ENCODE measurements at regions of chr19 and their contacts with region 1.

Region 1: DNA sequence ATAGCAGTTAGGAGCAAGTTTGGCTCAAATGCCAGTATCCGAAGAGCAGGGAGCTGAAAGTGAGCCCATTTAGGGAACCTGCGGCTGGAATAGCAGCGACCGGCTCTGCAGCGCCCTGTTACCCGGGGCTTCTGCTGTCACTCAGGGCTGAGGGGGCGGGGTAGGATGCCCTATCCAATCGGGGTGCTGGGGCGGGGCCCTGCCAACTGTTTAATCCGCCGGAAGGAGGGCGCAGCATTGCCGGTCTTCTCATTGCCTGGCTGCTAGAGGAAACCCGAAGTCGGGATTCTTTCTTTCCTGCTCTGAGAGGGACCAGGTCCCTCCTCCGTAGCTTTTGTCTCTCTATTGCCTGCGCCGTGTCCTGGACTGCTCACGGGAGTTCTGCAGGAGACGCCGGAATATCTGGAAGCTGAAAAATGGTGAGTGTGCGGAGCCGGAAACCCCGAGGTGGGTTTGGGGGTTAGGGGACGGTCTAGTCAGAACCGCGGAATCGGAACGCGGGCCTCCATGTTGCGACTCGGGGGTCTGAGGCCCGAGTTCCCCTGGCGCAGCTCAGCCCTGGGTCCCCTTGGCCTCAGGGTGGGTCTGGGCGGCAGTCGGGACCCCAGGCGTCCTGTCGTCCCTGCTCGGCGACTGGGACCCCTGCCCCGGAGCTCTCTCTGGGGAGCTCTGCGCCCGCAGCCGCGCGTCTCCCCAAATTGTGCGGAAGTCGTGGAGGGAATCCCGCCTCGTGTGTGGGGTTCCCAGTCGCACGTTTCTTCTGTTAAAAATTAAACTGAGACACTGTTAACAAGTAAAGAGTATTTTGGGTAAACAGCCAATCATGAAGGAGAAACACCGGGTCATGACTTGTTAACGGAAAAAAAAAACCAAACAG is 22.8 kb downstream of the ZNF763 start:
- DNase-seq: peak; percentile 94 to 97
- H3K4me3 ChIP-seq: peak overlapping the region; percentile 81 to 86 (median 86)
- H3K27ac ChIP-seq: peak overlapping the region; percentile 81 to 84
- H3K4me1 ChIP-seq: no peaks in the 10 kb centered on the region
- H3K27me3 ChIP-seq: no peaks in the 10 kb centered on the region
- CTCF ChIP-seq: no peak
- POLR2A ChIP-seq: no peak

Region 2: DNA sequence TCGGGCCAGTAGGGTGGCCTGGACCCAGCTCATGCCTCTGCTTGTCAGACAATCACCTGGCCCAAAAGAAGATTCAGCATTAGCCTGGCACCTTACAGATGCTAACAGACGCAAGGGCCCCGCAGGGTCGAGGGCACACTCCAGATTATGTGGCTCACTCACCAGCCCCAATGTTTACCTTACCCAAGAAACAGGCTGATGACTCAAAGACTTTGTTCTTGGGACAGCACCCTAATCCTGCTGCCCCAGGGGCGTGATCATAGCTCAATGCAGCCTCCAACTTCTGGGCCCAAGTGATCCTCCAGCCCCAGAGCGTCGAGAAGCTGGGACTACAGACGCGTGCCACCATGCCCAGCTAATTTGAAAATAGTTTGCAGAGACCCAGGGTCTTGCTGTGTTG is 468.5 kb before region 1 on chr19:
- intact Hi-C with region 1: no loop called
- DNase-seq: no peak
- H3K4me3 ChIP-seq: no peak overlapping the region
- H3K27ac ChIP-seq: no peak overlapping the region
- H3K4me1 ChIP-seq: no peaks in the 10 kb centered on the region
- H3K27me3 ChIP-seq: no peaks in the 10 kb centered on the region
- CTCF ChIP-seq: no peak
- POLR2A ChIP-seq: no peak

Region 3: GRCh38 chr19:11861301-11861700 is 126.3 kb before region 1 on chr19:
- intact Hi-C with region 1: no loop called
- DNase-seq: no peak
- H3K4me3 ChIP-seq: no peak overlapping the region
- H3K27ac ChIP-seq: no peak overlapping the region
- H3K4me1 ChIP-seq: no peaks in the 10 kb centered on the region
- H3K27me3 ChIP-seq: no peaks in the 10 kb centered on the region
- CTCF ChIP-seq: no peak
- POLR2A ChIP-seq: no peak

Region 4: DNA sequence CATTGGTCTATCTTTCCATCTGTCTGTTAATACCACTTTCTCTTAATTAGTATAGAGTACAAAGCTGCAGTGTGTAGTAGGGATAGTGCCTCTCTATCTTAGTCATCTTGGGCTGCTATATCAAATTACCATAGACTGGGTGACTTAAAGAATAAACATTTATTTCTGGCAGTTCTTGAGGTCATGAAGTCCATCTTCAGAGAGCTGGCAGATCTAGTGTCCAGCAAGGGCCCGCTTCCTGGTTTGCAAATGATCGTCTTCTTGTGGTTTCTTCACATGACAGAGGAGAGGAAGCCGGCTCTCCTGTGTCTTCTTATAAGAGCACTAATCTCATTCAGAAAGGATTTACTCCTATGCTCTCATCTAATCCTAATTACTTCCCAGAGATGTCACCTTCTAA is 56.6 kb before region 1 on chr19:
- intact Hi-C with region 1: loop called (anchors 10 kb)
- DNase-seq: no peak
- H3K4me3 ChIP-seq: no peak overlapping the region
- H3K27ac ChIP-seq: no peak overlapping the region
- H3K4me1 ChIP-seq: peaks cover 0 to 2% of the 10 kb centered on the region in 2 donors
- H3K27me3 ChIP-seq: no peaks in the 10 kb centered on the region
- CTCF ChIP-seq: no peak
- POLR2A ChIP-seq: no peak

Region 5: GRCh38 chr19:12035220-12036153 is 47.8 kb after region 1 on chr19 and contains the start of gene ZNF433:
- intact Hi-C with region 1: no loop called
- DNase-seq: peak; percentile 97 to 98
- H3K4me3 ChIP-seq: peak within 1 kb of the TSS; percentile 82 to 84 (median 83)
- H3K27ac ChIP-seq: peak within 1 kb of the TSS; percentile 96 to 97
- H3K4me1 ChIP-seq: peaks cover 0 to 7% of the 10 kb centered on the region in 2 donors
- H3K27me3 ChIP-seq: no peaks in the 10 kb centered on the region
- CTCF ChIP-seq: peak in 1 of 3 donors; percentile 9
- POLR2A ChIP-seq: peak; percentile 64
- total RNA-seq, gene ZNF433: 5.0 to 13.3 (median 8.8) TPM